PC-9 (cell line): ENCODE measurements at regions of chr10 and their contacts with region 1.

Region 1: DNA sequence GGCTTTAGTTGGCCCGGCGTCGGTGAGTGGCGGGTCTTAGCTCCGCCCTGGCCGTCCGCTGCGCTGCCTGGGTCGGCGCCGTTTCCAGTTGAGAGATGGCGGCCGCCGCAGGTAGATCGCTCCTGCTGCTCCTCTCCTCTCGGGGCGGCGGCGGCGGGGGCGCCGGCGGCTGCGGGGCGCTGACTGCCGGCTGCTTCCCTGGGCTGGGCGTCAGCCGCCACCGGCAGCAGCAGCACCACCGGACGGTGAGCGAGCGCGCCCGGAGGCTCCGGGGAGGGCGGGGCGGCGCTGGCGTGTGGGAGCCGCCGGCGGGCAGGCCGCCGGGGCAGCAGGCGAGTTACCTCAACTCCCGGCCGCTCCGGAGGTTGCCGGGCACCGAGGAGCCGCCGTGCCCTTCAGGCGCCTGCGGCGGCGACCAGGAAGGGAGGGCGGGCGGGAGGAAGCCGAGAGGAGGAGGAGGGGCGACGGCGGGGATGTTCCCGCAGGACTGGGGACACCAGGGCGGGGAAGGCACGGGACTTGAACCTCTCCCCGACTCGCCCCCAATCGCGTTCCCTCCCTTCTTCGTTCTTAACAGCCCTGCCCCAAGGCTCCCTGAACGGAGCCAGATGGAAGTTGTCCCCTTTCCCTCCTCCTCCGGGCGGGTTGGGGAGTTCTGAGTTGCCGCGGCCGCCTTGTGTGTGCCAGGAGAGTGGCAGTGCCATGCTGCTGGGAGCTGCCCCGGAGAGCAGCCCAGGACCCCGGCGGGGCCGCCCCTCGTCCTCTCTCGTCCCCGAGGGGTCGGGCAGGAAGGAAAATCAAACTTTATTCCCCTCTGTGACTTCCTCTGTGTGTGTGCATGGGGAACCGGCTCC is at the start of gene MCU:
- DNase-seq: peak in 1 of 2 experiments; percentile 95
- H3K4me3 ChIP-seq: peak within 1 kb of the TSS; percentile 94
- H3K27ac ChIP-seq: peak within 1 kb of the TSS; percentile 32; the same call in 1 of the 2 replicates
- H3K4me1 ChIP-seq: peaks cover 63% of the 10 kb centered on the region
- H3K27me3 ChIP-seq: no peaks in the 10 kb centered on the region
- CTCF ChIP-seq: no peak
- total RNA-seq, gene MCU: 59.5 and 61.9 TPM in 2 replicates

Region 2: DNA sequence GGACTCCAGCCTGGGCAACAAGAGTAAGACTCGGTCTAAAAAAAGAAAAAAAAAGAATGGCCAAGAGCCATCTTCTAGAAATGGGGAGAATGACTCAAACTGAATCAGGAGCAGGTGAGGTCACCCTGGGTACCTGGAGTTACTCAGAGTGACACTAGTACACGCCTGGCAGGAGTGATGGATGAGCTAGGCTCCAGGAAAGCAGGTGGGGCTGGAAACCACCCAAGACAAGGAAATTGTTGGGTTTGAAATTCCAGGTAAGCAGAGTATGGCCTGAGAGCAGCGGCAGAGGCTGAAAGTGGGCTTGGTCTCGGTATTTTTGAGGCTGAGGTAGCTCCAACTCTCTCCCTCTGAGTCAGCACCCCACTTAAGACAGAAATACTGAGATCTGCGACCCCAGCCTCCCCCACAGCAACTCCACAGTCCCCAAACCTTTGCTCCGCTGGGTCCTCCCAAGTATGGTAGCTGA is 400.0 kb before region 1 on chr10:
- CTCF ChIA-PET with region 1: no interaction called
- POLR2A ChIA-PET with region 1: interaction called, 14 read pairs
- intact Hi-C with region 1: no loop called
- DNase-seq: peak; percentile 91 to 99
- H3K4me3 ChIP-seq: peak overlapping the region; percentile 8; the same call in 1 of the 2 replicates
- H3K27ac ChIP-seq: peak overlapping the region; percentile 93
- H3K4me1 ChIP-seq: peaks cover 54% of the 10 kb centered on the region
- H3K27me3 ChIP-seq: no peaks in the 10 kb centered on the region
- CTCF ChIP-seq: no peak

Region 3: GRCh38 chr10:72525277-72525676 is 167.0 kb before region 1 on chr10:
- CTCF ChIA-PET with region 1: no interaction called
- POLR2A ChIA-PET with region 1: no interaction called
- intact Hi-C with region 1: no loop called
- DNase-seq: no peak
- H3K4me3 ChIP-seq: no peak overlapping the region
- H3K27ac ChIP-seq: no peak overlapping the region
- H3K4me1 ChIP-seq: no peaks in the 10 kb centered on the region
- H3K27me3 ChIP-seq: no peaks in the 10 kb centered on the region
- CTCF ChIP-seq: no peak

Region 4: DNA sequence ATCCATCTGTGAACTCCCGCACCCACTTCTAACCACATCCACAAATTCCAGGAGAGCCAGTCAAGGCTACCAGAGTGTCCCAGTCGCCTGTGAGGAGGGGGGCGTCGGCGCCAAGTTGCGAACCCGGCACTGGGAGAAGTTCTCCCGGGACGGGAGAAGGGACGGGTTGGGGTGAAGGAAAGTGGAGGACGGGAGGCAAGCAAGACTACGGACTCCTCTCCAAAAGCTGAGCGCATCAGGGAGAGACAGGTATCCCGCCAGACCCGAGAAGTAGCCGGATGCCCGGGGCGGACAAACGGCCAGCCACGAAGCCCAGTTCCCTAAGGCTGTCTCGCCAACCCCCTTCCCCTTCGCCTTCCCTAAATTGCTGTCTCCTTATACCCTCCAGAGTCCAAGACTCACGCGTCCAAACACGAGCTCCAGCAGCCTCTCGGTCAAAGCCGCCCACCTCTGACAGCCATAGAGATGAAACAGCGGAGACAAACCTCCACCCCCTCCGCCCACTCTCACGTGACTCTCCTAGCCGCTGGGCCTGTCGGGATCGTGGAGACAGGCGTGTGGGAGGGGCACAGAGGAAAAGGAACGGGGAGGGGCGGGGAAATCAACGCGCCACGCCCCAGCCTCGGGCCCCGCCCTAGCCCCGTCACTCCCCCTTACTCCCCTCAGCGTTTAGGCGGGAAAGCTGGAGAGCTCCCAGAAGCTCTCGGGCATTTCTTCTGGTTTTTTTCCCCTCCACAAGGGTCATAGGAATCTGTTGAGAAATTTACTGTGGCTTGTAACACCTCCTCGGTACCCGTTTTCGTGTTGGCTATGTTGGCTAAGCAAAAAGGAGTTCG is 66.5 kb before region 1 on chr10 and contains the start of gene MICU1:
- CTCF ChIA-PET with region 1: no interaction called
- POLR2A ChIA-PET with region 1: interaction called, 10 read pairs
- intact Hi-C with region 1: loop called (anchors 2 kb)
- DNase-seq: peak; percentile 90 to 96
- H3K4me3 ChIP-seq: peak within 1 kb of the TSS; percentile 80
- H3K27ac ChIP-seq: peak within 1 kb of the TSS; percentile 19
- H3K4me1 ChIP-seq: peaks cover 18% of the 10 kb centered on the region
- H3K27me3 ChIP-seq: no peaks in the 10 kb centered on the region
- CTCF ChIP-seq: no peak
- total RNA-seq, gene MICU1: 65.3 and 70.5 TPM in 2 replicates

Region 5: GRCh38 chr10:72702868-72703581 is 10.7 kb after region 1 on chr10:
- CTCF ChIA-PET with region 1: interaction called, 12 read pairs
- POLR2A ChIA-PET with region 1: interaction called, 26 read pairs
- intact Hi-C with region 1: no loop called
- DNase-seq: no peak
- H3K4me3 ChIP-seq: no peak overlapping the region
- H3K27ac ChIP-seq: no peak overlapping the region
- H3K4me1 ChIP-seq: no peaks in the 10 kb centered on the region
- H3K27me3 ChIP-seq: no peaks in the 10 kb centered on the region
- CTCF ChIP-seq: no peak

Region 6: GRCh38 chr10:72802763-72803505 is 110.7 kb after region 1 on chr10:
- CTCF ChIA-PET with region 1: no interaction called
- POLR2A ChIA-PET with region 1: interaction called, 27 read pairs
- intact Hi-C with region 1: no loop called
- DNase-seq: no peak
- H3K4me3 ChIP-seq: no peak overlapping the region
- H3K27ac ChIP-seq: peak overlapping the region; percentile 50
- H3K4me1 ChIP-seq: peaks cover 38% of the 10 kb centered on the region
- H3K27me3 ChIP-seq: no peaks in the 10 kb centered on the region
- CTCF ChIP-seq: no peak

Region 7: DNA sequence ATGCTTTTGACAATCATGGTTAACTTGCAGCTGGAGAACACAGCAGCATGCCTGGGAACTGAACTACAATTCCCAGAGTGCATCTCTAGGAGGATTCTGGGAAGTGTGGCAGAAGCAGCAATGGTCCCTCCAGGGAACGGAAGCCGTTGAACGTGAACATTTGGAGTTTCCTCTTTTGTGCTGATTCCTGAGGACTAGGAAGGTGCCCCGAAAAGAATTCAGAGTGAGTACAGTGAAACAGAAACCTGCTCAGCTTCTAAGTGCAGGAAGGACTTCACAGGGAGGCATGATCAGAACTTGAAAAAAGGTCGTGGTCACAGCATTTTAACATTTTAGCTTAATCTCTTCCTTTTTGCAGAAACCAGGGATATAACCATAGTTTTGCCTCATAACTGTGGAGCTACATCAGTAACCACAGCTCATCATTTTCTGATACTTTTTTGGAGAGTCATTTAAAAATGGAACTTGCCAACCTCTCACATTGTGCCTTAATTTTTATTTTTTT is 418.1 kb after region 1 on chr10 and contains the start of gene NUDT13:
- CTCF ChIA-PET with region 1: no interaction called
- POLR2A ChIA-PET with region 1: interaction called, 13 read pairs
- intact Hi-C with region 1: no loop called
- DNase-seq: peak; percentile 51 to 54
- H3K4me3 ChIP-seq: peak within 1 kb of the TSS; percentile 59
- H3K27ac ChIP-seq: peak within 1 kb of the TSS; percentile 91
- H3K4me1 ChIP-seq: peaks cover 19% of the 10 kb centered on the region
- H3K27me3 ChIP-seq: no peaks in the 10 kb centered on the region
- CTCF ChIP-seq: no peak
- total RNA-seq, gene NUDT13: 5.2 TPM in 2 replicates